ENCODE measurements at regions of chr14 and their contacts with region 1.

Region 1: DNA sequence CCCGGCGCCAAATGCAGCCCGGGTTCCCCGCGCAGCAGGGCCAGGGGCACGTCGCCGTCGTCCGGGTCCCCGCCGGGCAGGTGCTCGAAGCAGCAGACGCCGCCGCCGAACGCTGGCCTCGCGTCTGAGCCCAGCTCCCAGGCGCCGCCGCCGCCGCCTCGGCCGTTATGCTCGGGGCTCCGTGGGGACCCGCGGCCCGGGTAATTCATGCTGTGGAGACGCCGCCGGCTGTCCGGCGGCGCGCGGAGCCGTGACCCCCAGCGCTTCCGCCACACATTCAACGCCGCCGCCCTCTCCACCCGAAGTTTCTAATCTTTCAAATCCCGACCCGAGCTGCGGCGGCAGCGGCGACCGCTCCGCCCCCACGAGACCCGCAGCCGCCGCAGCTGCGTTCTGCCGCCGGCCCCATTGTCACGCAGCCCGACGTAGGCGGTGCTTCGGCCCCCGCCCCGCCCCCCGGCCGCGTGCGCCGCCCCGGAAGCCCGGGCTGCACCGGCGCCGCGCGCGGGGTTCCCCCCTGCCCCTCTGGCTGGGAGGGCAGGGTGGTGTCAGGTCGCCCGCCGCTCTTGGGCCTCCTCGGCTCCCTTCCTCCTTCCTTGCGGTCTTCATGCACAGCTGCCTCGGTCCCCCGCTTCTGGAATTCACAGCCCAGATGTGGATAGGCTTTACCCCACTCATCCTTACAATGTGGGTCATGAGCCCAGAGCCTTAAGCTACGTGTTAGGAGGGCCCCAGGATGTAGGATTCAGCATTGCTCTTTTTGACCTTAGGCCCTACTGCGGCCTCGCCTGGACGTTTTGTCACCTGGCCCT is at the start of gene DDHD1:
- DNase-seq: peak; percentile 87
- H3K4me3 ChIP-seq: peak within 1 kb of the TSS; percentile 97
- H3K27ac ChIP-seq: peak within 1 kb of the TSS; percentile 83
- H3K4me1 ChIP-seq: peaks cover 18% of the 10 kb centered on the region
- H3K27me3 ChIP-seq: no peaks in the 10 kb centered on the region
- CTCF ChIP-seq: no peak
- total RNA-seq, gene DDHD1: 17.8 and 21.9 TPM in 2 replicates

Region 2: GRCh38 chr14:52906071-52906601 is 247.0 kb before region 1 on chr14:
- CTCF ChIA-PET with region 1: no interaction called
- POLR2A ChIA-PET with region 1: interaction called, 10 read pairs
- intact Hi-C with region 1: no loop called
- DNase-seq: no peak
- H3K4me3 ChIP-seq: no peak overlapping the region
- H3K27ac ChIP-seq: no peak overlapping the region
- H3K4me1 ChIP-seq: peaks cover 20% of the 10 kb centered on the region
- H3K27me3 ChIP-seq: no peaks in the 10 kb centered on the region
- CTCF ChIP-seq: no peak

Region 3: GRCh38 chr14:53683229-53683628 is 530.1 kb after region 1 on chr14:
- CTCF ChIA-PET with region 1: no interaction called
- POLR2A ChIA-PET with region 1: no interaction called
- intact Hi-C with region 1: no loop called
- DNase-seq: no peak
- H3K4me3 ChIP-seq: no peak overlapping the region
- H3K27ac ChIP-seq: no peak overlapping the region
- H3K4me1 ChIP-seq: no peaks in the 10 kb centered on the region
- H3K27me3 ChIP-seq: no peaks in the 10 kb centered on the region
- CTCF ChIP-seq: no peak